ENCODE measurements at regions of chr12 and their contacts with region 1.

Region 1: GRCh38 chr12:43728117-43728516 is 30.5 kb downstream of the PUS7L start:
- DNase-seq: no peak
- ATAC-seq: no peak
- H3K4me3 ChIP-seq: no peak overlapping the region
- H3K27ac ChIP-seq: no peak overlapping the region
- H3K4me1 ChIP-seq: no peaks in the 10 kb centered on the region
- H3K27me3 ChIP-seq: no peaks in the 10 kb centered on the region
- CTCF ChIP-seq: no peak
- EP300 ChIP-seq: no peak
- POLR2A ChIP-seq: no peak
- RAD21 ChIP-seq: no peak

Region 2: GRCh38 chr12:43444940-43445564 is 283.1 kb before region 1 on chr12:
- CTCF ChIA-PET with region 1: interaction called, 6 read pairs
- POLR2A ChIA-PET with region 1: no interaction called
- in situ Hi-C with region 1: no loop called
- intact Hi-C with region 1: loop called (anchors 2 kb)
- DNase-seq: peak; percentile 39
- ATAC-seq: no peak; the same call in 2 of the 3 replicates
- H3K4me3 ChIP-seq: no peak overlapping the region
- H3K27ac ChIP-seq: no peak overlapping the region
- H3K4me1 ChIP-seq: no peaks in the 10 kb centered on the region
- H3K27me3 ChIP-seq: no peaks in the 10 kb centered on the region
- CTCF ChIP-seq: peak; percentile 54
- EP300 ChIP-seq: no peak
- POLR2A ChIP-seq: no peak
- RAD21 ChIP-seq: no peak